Prostate gland (tissue), 2 donors: ENCODE measurements at regions of chr12 and their contacts with region 1.

Region 1: DNA sequence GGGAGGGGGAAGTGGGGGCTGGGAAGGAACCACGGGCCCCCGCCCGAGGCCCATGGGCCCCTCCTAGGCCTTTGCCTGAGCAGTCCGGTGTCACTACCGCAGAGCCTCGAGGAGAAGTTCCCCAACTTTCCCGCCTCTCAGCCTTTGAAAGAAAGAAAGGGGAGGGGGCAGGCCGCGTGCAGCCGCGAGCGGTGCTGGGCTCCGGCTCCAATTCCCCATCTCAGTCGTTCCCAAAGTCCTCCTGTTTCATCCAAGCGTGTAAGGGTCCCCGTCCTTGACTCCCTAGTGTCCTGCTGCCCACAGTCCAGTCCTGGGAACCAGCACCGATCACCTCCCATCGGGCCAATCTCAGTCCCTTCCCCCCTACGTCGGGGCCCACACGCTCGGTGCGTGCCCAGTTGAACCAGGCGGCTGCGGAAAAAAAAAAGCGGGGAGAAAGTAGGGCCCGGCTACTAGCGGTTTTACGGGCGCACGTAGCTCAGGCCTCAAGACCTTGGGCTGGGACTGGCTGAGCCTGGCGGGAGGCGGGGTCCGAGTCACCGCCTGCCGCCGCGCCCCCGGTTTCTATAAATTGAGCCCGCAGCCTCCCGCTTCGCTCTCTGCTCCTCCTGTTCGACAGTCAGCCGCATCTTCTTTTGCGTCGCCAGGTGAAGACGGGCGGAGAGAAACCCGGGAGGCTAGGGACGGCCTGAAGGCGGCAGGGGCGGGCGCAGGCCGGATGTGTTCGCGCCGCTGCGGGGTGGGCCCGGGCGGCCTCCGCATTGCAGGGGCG is at the start of gene GAPDH:
- DNase-seq: peak; percentile 93
- H3K4me3 ChIP-seq: peak within 1 kb of the TSS; percentile 67 to 90
- H3K27ac ChIP-seq: peak within 1 kb of the TSS; percentile 90 to 93
- H3K4me1 ChIP-seq: peaks cover 12% of the 10 kb centered on the region
- H3K27me3 ChIP-seq: no peaks in the 10 kb centered on the region
- CTCF ChIP-seq: peak in 2 of 4 experiments; percentile 8 to 15
- POLR2A ChIP-seq: peak; percentile 87
- total RNA-seq, gene GAPDH: 1,469 to 2,105 TPM

Region 2: DNA sequence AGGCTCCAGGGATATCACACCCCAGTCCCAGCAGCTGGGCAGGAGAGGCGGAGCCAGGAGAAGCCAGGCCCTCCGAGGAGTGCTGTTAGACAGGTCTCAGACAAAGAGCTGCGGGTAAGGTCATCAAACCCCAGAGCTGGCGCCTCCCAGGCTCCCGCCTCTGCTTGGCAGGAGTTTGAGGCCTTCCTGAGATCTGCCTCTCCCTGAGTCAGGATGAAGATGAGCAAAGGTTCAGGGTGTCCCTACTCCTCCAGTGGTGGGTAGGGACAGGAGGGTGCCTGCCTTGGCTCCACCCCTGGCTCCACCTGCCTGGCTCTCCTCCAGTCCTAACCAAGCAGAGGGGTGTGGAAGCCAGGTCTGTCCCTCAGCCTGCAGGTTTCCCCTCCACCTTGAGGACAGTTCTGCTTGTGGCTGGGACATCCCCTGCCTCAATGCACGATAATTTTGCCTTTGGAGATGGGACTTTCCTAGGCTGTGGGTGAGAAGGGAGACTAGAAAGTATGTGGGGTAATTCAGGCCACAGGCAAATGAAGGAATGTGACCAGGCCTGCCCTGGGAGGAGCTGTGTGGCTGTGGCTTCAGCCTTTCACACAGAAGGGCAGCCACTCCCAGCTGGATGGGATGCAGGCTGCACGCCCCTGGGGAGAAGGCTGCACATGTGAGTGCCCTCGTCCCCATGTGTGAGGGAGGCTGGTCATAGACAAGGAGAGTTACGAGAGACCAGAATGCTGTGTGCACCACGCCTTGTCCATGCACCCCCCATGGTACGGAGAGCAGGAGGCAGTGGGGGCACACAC is 221.4 kb before region 1 on chr12:
- intact Hi-C with region 1: no loop called
- DNase-seq: peak; percentile 69
- H3K4me3 ChIP-seq: no peak overlapping the region
- H3K27ac ChIP-seq: peak overlapping the region; percentile 50 to 72
- H3K4me1 ChIP-seq: no peaks in the 10 kb centered on the region
- H3K27me3 ChIP-seq: no peaks in the 10 kb centered on the region
- CTCF ChIP-seq: no peak
- POLR2A ChIP-seq: peak; percentile 70

Region 3: DNA sequence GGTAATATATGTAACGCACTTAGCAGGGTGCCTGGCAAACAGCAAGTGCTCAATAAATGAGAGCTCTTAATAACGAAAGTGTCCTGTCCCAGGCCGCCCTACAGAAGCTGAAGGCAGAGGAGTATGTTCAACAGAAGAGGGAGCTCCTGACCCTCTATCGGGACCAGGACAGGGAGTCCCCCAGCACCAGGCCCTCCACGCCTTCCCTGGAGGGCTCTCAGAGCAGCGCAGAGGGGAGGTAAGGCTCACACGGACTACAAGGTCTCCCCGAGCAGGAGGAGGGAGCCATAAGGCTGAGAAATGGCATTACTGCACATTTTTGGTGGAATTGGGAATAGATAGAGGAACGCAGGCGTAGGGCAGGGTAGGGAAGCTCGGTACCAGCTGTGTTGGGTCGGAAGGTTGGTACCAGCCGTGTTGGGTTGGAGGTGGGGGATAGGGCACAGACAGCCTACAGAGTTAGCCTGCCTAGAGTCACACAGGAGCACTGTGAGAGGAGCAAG is 207.7 kb before region 1 on chr12:
- intact Hi-C with region 1: loop called (anchors 5 kb)
- DNase-seq: no peak
- H3K4me3 ChIP-seq: no peak overlapping the region
- H3K27ac ChIP-seq: peak overlapping the region; percentile 29 to 61
- H3K4me1 ChIP-seq: peaks cover 18% of the 10 kb centered on the region
- H3K27me3 ChIP-seq: no peaks in the 10 kb centered on the region
- CTCF ChIP-seq: peak in 3 of 4 experiments; percentile 36 to 55 (median 46)
- POLR2A ChIP-seq: no peak

Region 4: GRCh38 chr12:6367065-6367968 is 166.8 kb before region 1 on chr12:
- intact Hi-C with region 1: no loop called
- DNase-seq: no peak
- H3K4me3 ChIP-seq: no peak overlapping the region
- H3K27ac ChIP-seq: peak overlapping the region; percentile 12 to 21
- H3K4me1 ChIP-seq: peaks cover 16% of the 10 kb centered on the region
- H3K27me3 ChIP-seq: no peaks in the 10 kb centered on the region
- CTCF ChIP-seq: peak in 1 of 4 experiments; percentile 28
- POLR2A ChIP-seq: no peak

Region 5: GRCh38 chr12:6423267-6424007 is 110.7 kb before region 1 on chr12:
- intact Hi-C with region 1: loop called (anchors 2 kb)
- DNase-seq: peak; percentile 86
- H3K4me3 ChIP-seq: no peak overlapping the region
- H3K27ac ChIP-seq: no peak overlapping the region
- H3K4me1 ChIP-seq: no peaks in the 10 kb centered on the region
- H3K27me3 ChIP-seq: no peaks in the 10 kb centered on the region
- CTCF ChIP-seq: peak; percentile 80 to 94 (median 92)
- POLR2A ChIP-seq: no peak

Region 6: GRCh38 chr12:6493497-6494257 is 40.4 kb before region 1 on chr12 and contains the start of gene NCAPD2:
- intact Hi-C with region 1: loop called (anchors 2 kb)
- DNase-seq: peak; percentile 95
- H3K4me3 ChIP-seq: peak within 1 kb of the TSS; percentile 64 to 69
- H3K27ac ChIP-seq: peak within 1 kb of the TSS; percentile 94 to 96
- H3K4me1 ChIP-seq: no peaks in the 10 kb centered on the region
- H3K27me3 ChIP-seq: no peaks in the 10 kb centered on the region
- CTCF ChIP-seq: peak; percentile 17 to 69 (median 53)
- POLR2A ChIP-seq: peak; percentile 28
- total RNA-seq, gene NCAPD2: 86.7 to 99.0 TPM

Region 7: DNA sequence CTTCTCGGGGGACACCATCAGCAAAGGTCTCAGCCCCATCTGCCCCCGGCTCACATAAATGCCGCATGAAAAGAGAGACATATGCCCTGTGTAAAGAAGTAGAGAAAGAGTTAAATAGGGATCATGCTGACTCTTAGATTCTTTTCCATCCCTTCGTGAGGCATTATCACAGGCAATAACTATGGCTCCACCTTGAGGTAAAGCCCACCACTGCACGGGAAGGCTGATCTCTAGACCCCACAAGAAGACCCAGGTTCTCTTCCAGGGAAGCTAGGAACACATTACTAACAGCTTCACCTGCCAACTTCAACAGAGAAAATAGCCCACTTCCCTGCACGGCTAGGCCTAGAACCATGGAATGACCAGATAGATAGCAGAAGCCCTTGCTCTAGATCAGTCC is 48.1 kb after region 1 on chr12:
- intact Hi-C with region 1: no loop called
- DNase-seq: no peak
- H3K4me3 ChIP-seq: no peak overlapping the region
- H3K27ac ChIP-seq: no peak overlapping the region
- H3K4me1 ChIP-seq: no peaks in the 10 kb centered on the region
- H3K27me3 ChIP-seq: no peaks in the 10 kb centered on the region
- CTCF ChIP-seq: no peak
- POLR2A ChIP-seq: no peak